GM13977 (cell line): ENCODE measurements at regions of chr9 and their contacts with region 1.

Region 1: GRCh38 chr9:83937911-83938323 is 16.7 kb upstream of the KIF27 start:
- DNase-seq: peak; percentile 64
- CTCF ChIP-seq: peak; percentile 60

Region 2: GRCh38 chr9:82424599-82425120 is 1513.3 kb before region 1 on chr9:
- in situ Hi-C with region 1: no loop called
- DNase-seq: no peak
- CTCF ChIP-seq: no peak

Region 3: DNA sequence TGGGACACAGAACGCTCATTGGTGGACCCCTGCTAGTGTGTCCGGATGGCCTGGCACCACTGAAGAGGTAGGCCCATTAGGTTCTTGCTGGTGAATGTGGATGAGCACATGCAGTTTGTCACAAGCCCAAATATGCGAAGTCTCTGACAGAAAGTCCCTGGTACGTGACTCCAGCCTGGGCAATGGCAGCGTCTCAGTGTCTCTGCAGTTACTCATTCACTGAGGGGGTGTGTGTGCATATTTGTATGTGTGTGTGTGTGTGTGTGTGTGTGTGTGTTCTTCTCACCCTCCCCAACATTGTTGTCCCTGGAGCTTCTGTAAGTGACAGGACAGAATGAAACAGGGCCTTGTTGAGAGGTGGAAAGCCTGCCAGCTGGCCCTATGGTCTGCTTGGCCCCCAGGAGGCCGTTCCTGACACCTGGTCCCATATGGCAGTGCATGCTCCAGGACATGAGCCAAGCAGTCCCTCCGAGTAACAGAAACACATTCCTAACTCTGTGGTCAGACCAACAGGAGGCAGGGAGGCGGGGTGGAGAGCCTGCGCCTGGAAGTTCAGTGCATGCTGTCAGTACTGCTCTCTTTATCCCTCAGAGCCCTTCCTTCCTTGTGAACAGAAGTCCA is 232.7 kb after region 1 on chr9:
- in situ Hi-C with region 1: loop called (anchors 25 kb)
- DNase-seq: no peak
- CTCF ChIP-seq: no peak

Region 4: GRCh38 chr9:84315278-84315877 is 377.5 kb after region 1 on chr9:
- in situ Hi-C with region 1: loop called (anchors 10 kb)
- DNase-seq: peak; percentile 44
- CTCF ChIP-seq: peak; percentile 71